Dendritic cell treated with granulocyte-macrophage colony-stimulating factor and Interleukin-4, amounts not matched to agents 40 ng/mL and 50 ng/mL, for 4 days (primary cell): ENCODE measurements at regions of chr11 and their contacts with region 1.

Region 1: GRCh38 chr11:60831143-60831500 is 10.8 kb upstream of the CCDC86 start:
- H3K4me3 Mint-ChIP-seq: no peak overlapping the region
- H3K27ac Mint-ChIP-seq: no peak overlapping the region
- H3K4me1 Mint-ChIP-seq: peaks cover 26% of the 10 kb centered on the region
- H3K27me3 Mint-ChIP-seq: peaks cover 15% of the 10 kb centered on the region

Region 2: DNA sequence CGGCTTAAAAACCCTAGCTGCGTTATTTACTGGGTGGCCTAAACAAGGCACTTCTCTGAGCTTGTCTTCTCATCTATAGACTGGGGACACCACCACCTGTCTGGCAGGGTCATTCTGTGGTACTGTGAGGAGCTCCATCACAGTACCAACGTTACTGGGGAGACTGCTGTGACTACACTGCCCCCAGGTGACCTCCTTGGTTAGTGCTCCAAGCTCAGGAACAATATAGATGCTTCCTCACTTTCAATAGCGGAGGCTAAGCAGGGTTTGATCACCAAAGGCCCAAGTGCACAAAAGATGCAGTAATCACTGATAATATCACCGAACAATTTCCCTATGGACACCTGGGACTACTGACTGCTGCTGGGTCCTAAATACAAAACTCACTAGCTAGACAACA is 56.4 kb after region 1 on chr11:
- intact Hi-C with region 1: loop called (anchors 1 kb)
- H3K4me3 Mint-ChIP-seq: no peak overlapping the region
- H3K27ac Mint-ChIP-seq: no peak overlapping the region
- H3K4me1 Mint-ChIP-seq: peaks cover 30% of the 10 kb centered on the region
- H3K27me3 Mint-ChIP-seq: no peaks in the 10 kb centered on the region

Region 3: DNA sequence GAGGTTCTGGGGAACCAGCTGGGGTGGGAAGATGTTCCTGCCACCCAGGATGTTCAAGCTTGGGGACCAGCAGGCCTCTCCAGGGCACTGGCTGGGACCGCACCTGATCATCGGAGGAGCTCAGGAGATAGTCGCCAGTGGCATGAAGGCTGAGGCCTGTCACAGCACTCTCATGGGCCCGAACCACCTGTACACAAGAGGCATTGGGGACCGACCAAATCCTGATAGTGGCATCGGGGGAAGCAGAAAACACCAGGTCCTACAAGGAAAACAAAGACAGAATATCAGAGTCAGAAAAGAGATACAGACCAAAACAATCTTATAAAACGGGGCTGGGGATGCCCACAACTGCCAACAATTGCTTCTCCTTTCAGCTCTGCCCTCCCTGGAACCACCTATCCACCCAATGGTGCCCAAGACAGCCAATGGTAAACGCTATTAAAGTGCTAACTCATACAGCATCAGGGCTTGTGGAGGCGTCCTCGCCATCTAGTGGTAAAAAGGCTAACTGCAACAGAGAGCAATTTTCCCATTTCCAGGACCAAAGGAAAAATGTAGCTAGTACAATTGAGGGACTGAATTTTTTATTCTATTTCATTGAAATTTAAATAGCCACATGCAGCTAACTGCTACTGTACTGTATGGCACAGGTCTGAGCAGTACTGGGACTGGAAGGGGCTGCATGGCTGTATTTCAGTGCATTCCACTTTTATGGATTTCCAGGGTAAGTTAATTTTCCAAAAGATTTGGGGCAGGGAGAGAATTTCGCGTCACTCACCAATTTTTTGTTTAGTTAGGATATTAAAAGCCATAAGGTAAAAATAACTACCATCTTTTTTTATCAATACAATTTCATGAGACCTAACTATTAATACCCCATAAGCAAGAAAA is 68.2 kb after region 1 on chr11:
- intact Hi-C with region 1: loop called (anchors 2 kb)
- H3K4me3 Mint-ChIP-seq: no peak overlapping the region
- H3K27ac Mint-ChIP-seq: peak overlapping the region; percentile 38
- H3K4me1 Mint-ChIP-seq: peaks cover 34% of the 10 kb centered on the region
- H3K27me3 Mint-ChIP-seq: no peaks in the 10 kb centered on the region

Region 4: GRCh38 chr11:61187505-61188130 is 356.5 kb after region 1 on chr11:
- intact Hi-C with region 1: loop called (anchors 10 kb)
- H3K4me3 Mint-ChIP-seq: no peak overlapping the region
- H3K27ac Mint-ChIP-seq: no peak overlapping the region
- H3K4me1 Mint-ChIP-seq: peaks cover 21% of the 10 kb centered on the region
- H3K27me3 Mint-ChIP-seq: peaks cover 4% of the 10 kb centered on the region

Region 5: GRCh38 chr11:61429691-61430582 is 598.8 kb after region 1 on chr11 and contains the starts of genes CPSF7 and SDHAF2:
- intact Hi-C with region 1: no loop called
- H3K4me3 Mint-ChIP-seq: peak within 1 kb of the TSS; percentile 96
- H3K27ac Mint-ChIP-seq: peak within 1 kb of the TSS; percentile 99
- H3K4me1 Mint-ChIP-seq: peaks cover 40% of the 10 kb centered on the region
- H3K27me3 Mint-ChIP-seq: no peaks in the 10 kb centered on the region